ENCODE measurements at regions of chr10 and their contacts with region 1.

Region 1: GRCh38 chr10:75111367-75111906 is at the start of gene SAMD8:
- DNase-seq: peak; percentile 97
- H3K4me3 ChIP-seq: peak within 1 kb of the TSS; percentile 88 to 98 (median 93)
- H3K27ac ChIP-seq: peak within 1 kb of the TSS; percentile 94
- H3K4me1 ChIP-seq: peaks cover 15% of the 10 kb centered on the region
- H3K27me3 ChIP-seq: no peaks in the 10 kb centered on the region
- CTCF ChIP-seq: peak in 1 of 2 donors; percentile 29
- POLR2A ChIP-seq: no peak
- total RNA-seq, gene SAMD8: 22.8 and 23.2 TPM in 2 replicates

Region 2: DNA sequence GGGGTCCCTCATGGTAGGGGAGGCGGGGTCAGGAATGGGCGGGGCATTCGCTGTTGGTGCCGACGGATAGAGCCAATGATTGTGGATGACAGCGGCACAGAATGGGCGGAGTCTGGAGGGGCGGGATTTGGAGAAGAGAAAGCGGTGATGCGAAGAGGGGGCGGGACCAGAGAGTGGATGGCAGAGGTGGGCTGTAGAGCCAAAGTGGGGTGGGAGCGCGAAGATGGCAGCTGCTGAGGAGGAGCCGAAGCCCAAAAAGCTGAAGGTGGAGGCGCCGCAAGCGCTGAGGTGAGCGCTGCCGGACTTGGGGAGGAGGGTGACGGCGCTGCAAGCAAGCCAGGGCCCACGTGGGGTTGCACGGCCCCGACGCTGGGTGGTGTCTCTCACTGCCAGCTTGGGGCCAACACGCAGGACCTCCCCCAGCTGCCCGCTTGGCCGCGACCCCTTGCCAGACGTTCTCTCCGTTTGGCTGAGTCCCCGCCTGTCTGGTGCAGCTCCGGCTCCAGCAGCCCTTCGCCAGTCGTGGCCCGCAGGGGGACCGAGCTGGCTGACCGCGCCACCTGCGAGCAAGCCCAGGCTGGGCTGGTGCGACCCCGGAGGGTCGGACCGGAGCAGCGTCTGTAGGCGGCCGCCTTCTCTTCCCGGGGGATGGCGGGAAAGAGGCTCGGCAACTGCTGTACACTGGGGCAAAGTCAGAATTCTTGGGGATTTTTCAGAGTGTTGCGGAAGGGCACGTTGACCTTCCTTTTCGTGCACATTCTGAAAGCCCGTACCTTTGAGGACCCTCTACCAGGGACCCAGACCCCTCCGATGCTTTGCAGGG is 960.2 kb before region 1 on chr10 and contains the start of gene ADK:
- CTCF ChIA-PET with region 1: no interaction called
- POLR2A ChIA-PET with region 1: no interaction called
- dilution Hi-C with region 1: no loop called
- intact Hi-C with region 1: loop called (anchors 10 kb)
- DNase-seq: peak; percentile 99
- H3K4me3 ChIP-seq: peak within 1 kb of the TSS; percentile 82 to 96 (median 87)
- H3K27ac ChIP-seq: peak within 1 kb of the TSS; percentile 93
- H3K4me1 ChIP-seq: peaks cover 13% of the 10 kb centered on the region
- H3K27me3 ChIP-seq: no peaks in the 10 kb centered on the region
- CTCF ChIP-seq: peak in 1 of 2 donors; percentile 18
- POLR2A ChIP-seq: peak; percentile 82
- total RNA-seq, gene ADK: 38.1 and 46.5 TPM in 2 replicates

Region 3: DNA sequence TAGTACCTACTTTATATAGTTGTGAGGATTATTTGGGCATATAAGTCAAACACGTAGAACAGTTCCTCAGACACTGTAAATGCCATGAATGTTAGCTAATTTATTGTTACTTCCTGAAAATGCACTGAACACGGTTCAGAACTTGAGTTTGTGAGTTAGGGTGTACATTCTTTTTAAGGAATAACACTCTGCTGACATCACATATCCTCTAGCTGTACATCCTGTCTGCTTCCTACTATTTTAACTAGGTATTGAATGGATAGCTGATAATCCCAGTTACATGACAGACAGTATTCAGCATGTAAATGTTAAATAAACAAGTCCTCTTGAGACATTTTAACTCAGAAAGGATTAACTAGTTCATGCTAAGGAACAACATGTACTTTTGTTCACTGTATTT is 16.0 kb after region 1 on chr10:
- CTCF ChIA-PET with region 1: interaction called, 5 read pairs
- POLR2A ChIA-PET with region 1: interaction called, 3 read pairs
- dilution Hi-C with region 1: no loop called
- intact Hi-C with region 1: loop called (anchors 1 kb)
- DNase-seq: peak; percentile 82
- H3K4me3 ChIP-seq: no peak overlapping the region
- H3K27ac ChIP-seq: peak overlapping the region; percentile 72
- H3K4me1 ChIP-seq: peaks cover 25% of the 10 kb centered on the region
- H3K27me3 ChIP-seq: no peaks in the 10 kb centered on the region
- CTCF ChIP-seq: no peak
- POLR2A ChIP-seq: no peak

Region 4: GRCh38 chr10:75145590-75145989 is 34.2 kb after region 1 on chr10:
- CTCF ChIA-PET with region 1: no interaction called
- POLR2A ChIA-PET with region 1: no interaction called
- dilution Hi-C with region 1: no loop called
- intact Hi-C with region 1: loop called (anchors 2 kb)
- DNase-seq: no peak
- H3K4me3 ChIP-seq: no peak overlapping the region
- H3K27ac ChIP-seq: no peak overlapping the region
- H3K4me1 ChIP-seq: peaks cover 17% of the 10 kb centered on the region
- H3K27me3 ChIP-seq: no peaks in the 10 kb centered on the region
- CTCF ChIP-seq: no peak
- POLR2A ChIP-seq: no peak

Region 5: GRCh38 chr10:75181073-75181472 is 69.6 kb after region 1 on chr10:
- CTCF ChIA-PET with region 1: no interaction called
- POLR2A ChIA-PET with region 1: no interaction called
- dilution Hi-C with region 1: no loop called
- intact Hi-C with region 1: loop called (anchors 1 kb)
- DNase-seq: peak; percentile 66
- H3K4me3 ChIP-seq: no peak overlapping the region
- H3K27ac ChIP-seq: peak overlapping the region; percentile 10
- H3K4me1 ChIP-seq: peaks cover 15% of the 10 kb centered on the region
- H3K27me3 ChIP-seq: no peaks in the 10 kb centered on the region
- CTCF ChIP-seq: no peak
- POLR2A ChIP-seq: no peak

Region 6: DNA sequence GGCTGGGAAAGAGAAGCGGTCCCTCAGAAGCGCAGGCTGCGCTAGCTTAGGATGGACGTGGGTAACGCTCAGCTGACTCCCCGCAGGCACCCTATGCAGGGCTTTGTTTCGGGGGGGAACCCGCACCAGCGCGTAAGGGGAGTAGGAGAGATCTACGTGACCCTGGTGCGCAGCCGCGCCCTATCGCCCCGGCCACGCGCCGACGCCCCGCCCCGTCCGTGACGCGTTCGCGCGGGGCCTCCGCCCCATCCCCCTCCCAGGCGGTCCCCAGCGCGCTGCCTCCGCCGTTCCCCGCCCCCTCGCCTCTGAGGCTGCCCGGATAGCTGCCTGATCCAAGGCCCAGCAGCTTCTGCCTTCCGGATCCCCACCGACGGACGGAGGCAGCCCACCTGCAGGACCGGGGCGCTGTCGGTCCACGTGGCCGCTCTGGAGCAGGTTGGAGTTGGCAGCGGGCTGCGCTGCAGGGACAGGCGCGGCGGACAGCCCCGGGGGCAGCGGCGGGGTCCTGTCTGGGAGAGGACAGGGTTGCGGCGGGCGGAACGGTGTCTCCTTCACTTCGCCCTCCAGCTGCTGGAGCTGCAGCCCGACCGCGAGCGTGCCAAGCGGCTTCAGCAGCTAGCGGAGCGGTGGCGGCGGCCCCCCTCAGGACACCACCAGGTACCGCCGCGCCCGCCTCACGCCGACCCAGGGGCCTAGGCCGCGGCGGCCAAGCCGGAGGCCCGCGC is 99.0 kb after region 1 on chr10 and contains the start of gene VDAC2:
- CTCF ChIA-PET with region 1: interaction called, 3 read pairs
- POLR2A ChIA-PET with region 1: no interaction called
- dilution Hi-C with region 1: no loop called
- intact Hi-C with region 1: loop called (anchors 1 kb)
- DNase-seq: peak; percentile 90
- H3K4me3 ChIP-seq: peak within 1 kb of the TSS; percentile 63 to 99 (median 96)
- H3K27ac ChIP-seq: peak within 1 kb of the TSS; percentile 94
- H3K4me1 ChIP-seq: peaks cover 21% of the 10 kb centered on the region
- H3K27me3 ChIP-seq: no peaks in the 10 kb centered on the region
- CTCF ChIP-seq: no peak
- POLR2A ChIP-seq: peak; percentile 91
- total RNA-seq, gene VDAC2: 220 and 222 TPM in 2 replicates